Psoas muscle (tissue), 8 donors: ENCODE measurements at regions of chr1 and their contacts with region 1.

Region 1: GRCh38 chr1:102715150-102715549 is 393.2 kb downstream of the COL11A1 start:
- DNase-seq: no peak
- ATAC-seq: no peak
- H3K4me3 ChIP-seq: no peak overlapping the region
- H3K27ac ChIP-seq: no peak overlapping the region
- H3K4me1 ChIP-seq: no peaks in the 10 kb centered on the region
- H3K27me3 ChIP-seq: no peaks in the 10 kb centered on the region
- CTCF ChIP-seq: no peak

Region 2: DNA sequence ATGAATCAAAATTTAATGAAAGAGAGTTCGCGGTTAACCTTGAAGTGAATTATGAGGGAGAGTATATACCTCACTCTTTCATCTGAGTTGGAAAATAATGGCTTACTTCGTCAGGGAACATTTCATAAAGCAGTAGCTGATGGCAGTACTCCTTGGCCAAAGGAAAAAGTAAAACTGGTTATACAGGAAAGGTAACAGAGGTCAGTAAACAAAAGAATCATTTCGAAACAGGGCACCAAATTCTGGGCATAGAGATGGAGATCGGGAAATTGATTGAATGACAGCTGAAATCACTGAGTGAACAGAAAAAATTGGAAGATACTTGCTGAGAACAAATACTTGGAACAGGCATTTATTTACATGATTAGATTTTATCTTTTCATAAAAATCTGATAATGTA is 917.4 kb before region 1 on chr1:
- intact Hi-C with region 1: no loop called
- DNase-seq: no peak
- ATAC-seq: no peak
- H3K4me3 ChIP-seq: no peak overlapping the region
- H3K27ac ChIP-seq: no peak overlapping the region
- H3K4me1 ChIP-seq: no peaks in the 10 kb centered on the region
- H3K27me3 ChIP-seq: no peaks in the 10 kb centered on the region
- CTCF ChIP-seq: no peak

Region 3: GRCh38 chr1:102219463-102219862 is 495.7 kb before region 1 on chr1:
- intact Hi-C with region 1: no loop called
- DNase-seq: no peak
- ATAC-seq: no peak
- H3K4me3 ChIP-seq: no peak overlapping the region
- H3K27ac ChIP-seq: no peak overlapping the region
- H3K4me1 ChIP-seq: no peaks in the 10 kb centered on the region
- H3K27me3 ChIP-seq: no peaks in the 10 kb centered on the region
- CTCF ChIP-seq: no peak

Region 4: GRCh38 chr1:102687383-102687782 is 27.8 kb before region 1 on chr1:
- intact Hi-C with region 1: loop called in 1 of 2 experiments (anchors 1 kb)
- DNase-seq: no peak
- ATAC-seq: no peak
- H3K4me3 ChIP-seq: no peak overlapping the region
- H3K27ac ChIP-seq: no peak overlapping the region
- H3K4me1 ChIP-seq: no peaks in the 10 kb centered on the region
- H3K27me3 ChIP-seq: no peaks in the 10 kb centered on the region
- CTCF ChIP-seq: no peak